HepG2 (cell line): ENCODE measurements at regions of chr5 and their contacts with region 1.

Region 1: GRCh38 chr5:23507278-23507685 is at the start of gene PRDM9:
- DNase-seq: peak; percentile 61
- ATAC-seq: peak; percentile 91
- H3K4me3 ChIP-seq: peak within 1 kb of the TSS in 2 of 3 experiments; percentile 43 to 56; a peak in 5 of 6 replicates
- H3K27ac ChIP-seq: no peak within 1 kb of the TSS
- H3K4me1 ChIP-seq: peaks cover 13% of the 10 kb centered on the region; the same call in 1 of the 2 replicates
- H3K27me3 ChIP-seq: no peaks in the 10 kb centered on the region; a peak in 1 of 5 replicates
- CTCF ChIP-seq: no peak
- EP300 ChIP-seq: no peak
- POLR2A ChIP-seq: no peak
- RAD21 ChIP-seq: no peak
- total RNA-seq, gene PRDM9: not detected in 2 replicates

Region 2: DNA sequence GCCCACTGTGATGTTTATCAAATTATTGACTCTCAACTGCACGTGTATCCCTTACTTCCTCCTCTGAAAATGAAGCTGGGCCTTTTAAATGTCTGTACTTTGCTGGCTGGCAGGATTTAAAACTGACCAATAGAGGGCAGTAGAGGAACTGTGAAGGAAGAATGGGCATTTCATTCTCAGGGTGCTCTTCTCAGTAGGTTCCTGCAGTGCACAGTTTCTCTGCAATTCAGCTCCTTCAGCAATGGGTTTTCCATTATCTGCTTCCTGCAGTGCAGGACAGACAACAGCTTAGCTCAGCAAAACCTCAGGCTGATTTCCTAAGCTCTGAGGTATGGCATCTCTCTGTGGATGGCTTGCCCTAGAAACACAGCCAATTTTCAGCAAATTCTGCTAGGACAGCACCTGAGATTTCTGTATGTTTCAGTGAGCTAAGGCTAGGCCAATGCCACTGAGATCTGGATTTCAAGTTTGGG is 298.3 kb before region 1 on chr5:
- CTCF ChIA-PET with region 1: no interaction called
- POLR2A ChIA-PET with region 1: no interaction called
- in situ Hi-C with region 1: no loop called
- intact Hi-C with region 1: loop called (anchors 1 kb)
- DNase-seq: peak; percentile 39
- ATAC-seq: peak; percentile 81
- H3K4me3 ChIP-seq: no peak overlapping the region
- H3K27ac ChIP-seq: no peak overlapping the region
- H3K4me1 ChIP-seq: no peaks in the 10 kb centered on the region
- H3K27me3 ChIP-seq: no peaks in the 10 kb centered on the region
- CTCF ChIP-seq: peak; percentile 71
- EP300 ChIP-seq: no peak
- POLR2A ChIP-seq: no peak
- RAD21 ChIP-seq: no peak

Region 3: GRCh38 chr5:23352437-23352836 is 154.8 kb before region 1 on chr5:
- CTCF ChIA-PET with region 1: no interaction called
- POLR2A ChIA-PET with region 1: no interaction called
- in situ Hi-C with region 1: no loop called
- intact Hi-C with region 1: loop called (anchors 1 kb)
- DNase-seq: peak; percentile 15
- ATAC-seq: peak; percentile 75
- H3K4me3 ChIP-seq: no peak overlapping the region
- H3K27ac ChIP-seq: no peak overlapping the region
- H3K4me1 ChIP-seq: no peaks in the 10 kb centered on the region
- H3K27me3 ChIP-seq: no peaks in the 10 kb centered on the region
- CTCF ChIP-seq: no peak
- EP300 ChIP-seq: no peak
- POLR2A ChIP-seq: no peak
- RAD21 ChIP-seq: no peak

Region 4: DNA sequence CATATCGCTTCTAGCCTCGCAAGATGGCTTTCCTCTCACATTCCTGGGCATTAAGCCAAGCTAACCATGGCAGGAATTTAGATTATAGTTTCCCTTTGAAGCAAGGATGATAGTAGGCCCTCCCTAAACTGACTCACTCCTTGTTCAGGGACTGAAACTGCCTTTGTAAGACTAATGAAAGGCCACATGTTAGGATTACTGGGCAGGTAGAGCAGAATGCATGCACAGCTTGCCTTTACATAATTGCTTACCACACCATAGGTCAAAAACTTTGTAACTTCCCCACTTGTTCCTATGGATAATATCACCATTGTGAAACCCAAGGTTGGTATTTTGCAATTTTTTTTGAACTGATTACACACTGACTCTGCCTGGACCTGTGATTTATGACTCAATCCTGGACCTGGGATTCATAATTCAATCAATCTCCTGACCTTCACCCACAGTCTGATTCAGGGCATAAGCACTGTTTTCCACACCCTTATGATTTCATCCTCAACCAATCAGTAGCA is 40.8 kb before region 1 on chr5:
- CTCF ChIA-PET with region 1: no interaction called
- POLR2A ChIA-PET with region 1: no interaction called
- in situ Hi-C with region 1: no loop called
- intact Hi-C with region 1: no loop called
- DNase-seq: peak; percentile 75
- ATAC-seq: peak; percentile 57; the same call in 2 of the 3 replicates
- H3K4me3 ChIP-seq: no peak overlapping the region
- H3K27ac ChIP-seq: no peak overlapping the region
- H3K4me1 ChIP-seq: no peaks in the 10 kb centered on the region
- H3K27me3 ChIP-seq: no peaks in the 10 kb centered on the region
- CTCF ChIP-seq: no peak
- EP300 ChIP-seq: no peak
- POLR2A ChIP-seq: no peak
- RAD21 ChIP-seq: no peak

Region 5: GRCh38 chr5:23494538-23494937 is 12.7 kb before region 1 on chr5:
- CTCF ChIA-PET with region 1: no interaction called
- POLR2A ChIA-PET with region 1: no interaction called
- in situ Hi-C with region 1: no loop called
- intact Hi-C with region 1: no loop called
- DNase-seq: no peak
- ATAC-seq: no peak
- H3K4me3 ChIP-seq: no peak overlapping the region
- H3K27ac ChIP-seq: no peak overlapping the region
- H3K4me1 ChIP-seq: no peaks in the 10 kb centered on the region
- H3K27me3 ChIP-seq: no peaks in the 10 kb centered on the region
- CTCF ChIP-seq: no peak
- EP300 ChIP-seq: no peak
- POLR2A ChIP-seq: no peak
- RAD21 ChIP-seq: no peak